Endothelial cell of umbilical vein (primary cell): ENCODE measurements at regions of chr2 and their contacts with region 1.

Region 1: DNA sequence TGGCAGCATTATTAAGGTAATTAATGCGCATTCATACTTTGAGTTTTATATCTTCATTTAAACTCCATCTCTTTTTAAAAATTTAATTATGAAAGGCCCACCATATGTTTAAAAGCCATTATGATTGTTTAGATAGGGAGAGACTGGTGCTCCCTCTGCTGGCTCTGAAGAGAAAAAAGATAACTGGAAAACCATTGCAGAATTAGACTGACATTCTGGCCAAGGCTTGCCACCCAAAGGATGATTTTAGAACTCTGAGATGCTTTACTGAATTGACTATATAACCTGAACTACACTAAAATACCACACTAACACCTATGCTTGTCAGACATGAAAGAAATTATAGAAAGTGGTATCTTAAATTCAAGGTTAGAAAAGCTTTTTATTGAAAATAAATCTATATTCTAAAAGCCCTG is 127.6 kb upstream of the SPOPL start:
- DNase-seq: peak; percentile 57
- H3K4me3 ChIP-seq: no peak overlapping the region
- H3K27ac ChIP-seq: no peak overlapping the region
- H3K4me1 ChIP-seq: no peaks in the 10 kb centered on the region
- H3K27me3 ChIP-seq: no peaks in the 10 kb centered on the region
- CTCF ChIP-seq: peak; percentile 43 to 53
- POLR2A ChIP-seq: no peak

Region 2: GRCh38 chr2:137910641-137911040 is 463.4 kb before region 1 on chr2:
- CTCF ChIA-PET with region 1: interaction called, 16 read pairs
- POLR2A ChIA-PET with region 1: no interaction called
- dilution Hi-C with region 1: no loop called
- intact Hi-C with region 1: loop called (anchors 1 kb)
- DNase-seq: peak; percentile 52
- H3K4me3 ChIP-seq: no peak overlapping the region
- H3K27ac ChIP-seq: no peak overlapping the region
- H3K4me1 ChIP-seq: peaks cover 4% of the 10 kb centered on the region
- H3K27me3 ChIP-seq: peaks cover 0 to 3% of the 10 kb centered on the region in 2 experiments
- CTCF ChIP-seq: peak; percentile 26
- POLR2A ChIP-seq: no peak

Region 3: GRCh38 chr2:138090330-138090729 is 283.7 kb before region 1 on chr2:
- CTCF ChIA-PET with region 1: interaction called, 31 read pairs
- POLR2A ChIA-PET with region 1: no interaction called
- dilution Hi-C with region 1: no loop called
- intact Hi-C with region 1: loop called (anchors 1 kb)
- DNase-seq: peak; percentile 76
- H3K4me3 ChIP-seq: no peak overlapping the region
- H3K27ac ChIP-seq: no peak overlapping the region
- H3K4me1 ChIP-seq: no peaks in the 10 kb centered on the region
- H3K27me3 ChIP-seq: no peaks in the 10 kb centered on the region
- CTCF ChIP-seq: peak; percentile 53 to 70
- POLR2A ChIP-seq: no peak

Region 4: DNA sequence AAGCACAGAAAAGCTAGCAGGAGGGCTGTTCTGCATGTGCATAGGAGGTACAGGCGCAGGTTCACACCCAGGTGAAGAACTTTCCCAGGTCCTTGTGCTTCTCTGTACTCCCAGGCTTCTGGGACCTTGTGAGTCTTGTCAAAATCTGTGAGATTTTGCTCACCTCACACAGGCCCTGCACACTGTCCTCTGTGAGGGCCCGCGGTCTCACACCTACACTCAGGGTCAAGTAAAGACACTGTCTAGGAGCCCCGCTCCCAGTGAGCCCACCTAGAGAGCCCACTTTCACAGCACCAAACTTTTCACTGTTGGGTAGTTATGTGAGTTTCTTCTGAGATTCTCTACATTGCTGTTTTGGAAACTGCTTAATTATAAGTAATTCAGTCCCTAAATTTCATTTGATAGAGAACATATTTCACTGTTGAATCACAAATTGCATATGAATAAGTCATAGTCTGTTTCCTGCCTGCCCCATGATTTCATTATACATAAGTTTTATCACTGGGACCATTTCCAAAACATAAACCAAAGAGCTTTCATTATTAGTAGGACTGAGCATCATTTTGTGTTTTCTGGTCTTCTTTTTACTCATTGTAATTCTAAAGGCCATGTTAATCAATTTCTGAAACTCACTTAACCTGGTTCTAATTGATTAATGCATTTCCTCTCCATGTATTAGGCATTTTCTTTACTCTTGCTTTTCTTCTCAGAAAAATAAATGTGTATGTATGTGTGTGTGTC is 106.7 kb before region 1 on chr2:
- CTCF ChIA-PET with region 1: interaction called, 5 read pairs
- POLR2A ChIA-PET with region 1: no interaction called
- dilution Hi-C with region 1: no loop called
- intact Hi-C with region 1: loop called (anchors 5 kb)
- DNase-seq: peak; percentile 79
- H3K4me3 ChIP-seq: peak overlapping the region in 1 of 3 experiments; percentile 22
- H3K27ac ChIP-seq: peak overlapping the region; percentile 97
- H3K4me1 ChIP-seq: peaks cover 23% of the 10 kb centered on the region
- H3K27me3 ChIP-seq: no peaks in the 10 kb centered on the region
- CTCF ChIP-seq: no peak
- POLR2A ChIP-seq: no peak

Region 5: GRCh38 chr2:138501425-138502283 is 127.7 kb after region 1 on chr2 and contains the start of gene SPOPL:
- CTCF ChIA-PET with region 1: no interaction called
- POLR2A ChIA-PET with region 1: no interaction called
- dilution Hi-C with region 1: no loop called
- intact Hi-C with region 1: loop called (anchors 2 kb)
- DNase-seq: peak; percentile 90
- H3K4me3 ChIP-seq: peak within 1 kb of the TSS; percentile 93 to 97 (median 96)
- H3K27ac ChIP-seq: peak within 1 kb of the TSS; percentile 92
- H3K4me1 ChIP-seq: peaks cover 26% of the 10 kb centered on the region
- H3K27me3 ChIP-seq: no peaks in the 10 kb centered on the region
- CTCF ChIP-seq: no peak
- POLR2A ChIP-seq: peak; percentile 90
- total RNA-seq, gene SPOPL: 14.9 and 17.4 TPM in 2 replicates

Region 6: GRCh38 chr2:138827426-138828054 is 453.5 kb after region 1 on chr2:
- CTCF ChIA-PET with region 1: interaction called, 9 read pairs
- POLR2A ChIA-PET with region 1: no interaction called
- dilution Hi-C with region 1: no loop called
- intact Hi-C with region 1: loop called (anchors 1 kb)
- DNase-seq: peak; percentile 66
- H3K4me3 ChIP-seq: no peak overlapping the region
- H3K27ac ChIP-seq: no peak overlapping the region
- H3K4me1 ChIP-seq: no peaks in the 10 kb centered on the region
- H3K27me3 ChIP-seq: no peaks in the 10 kb centered on the region
- CTCF ChIP-seq: peak; percentile 33 to 52
- POLR2A ChIP-seq: no peak